ENCODE measurements at regions of chr14 and their contacts with region 1.

Region 1: GRCh38 chr14:102125546-102125945 is 14.2 kb upstream of the WDR20 start:
- DNase-seq: no peak
- ATAC-seq: no peak

Region 2: DNA sequence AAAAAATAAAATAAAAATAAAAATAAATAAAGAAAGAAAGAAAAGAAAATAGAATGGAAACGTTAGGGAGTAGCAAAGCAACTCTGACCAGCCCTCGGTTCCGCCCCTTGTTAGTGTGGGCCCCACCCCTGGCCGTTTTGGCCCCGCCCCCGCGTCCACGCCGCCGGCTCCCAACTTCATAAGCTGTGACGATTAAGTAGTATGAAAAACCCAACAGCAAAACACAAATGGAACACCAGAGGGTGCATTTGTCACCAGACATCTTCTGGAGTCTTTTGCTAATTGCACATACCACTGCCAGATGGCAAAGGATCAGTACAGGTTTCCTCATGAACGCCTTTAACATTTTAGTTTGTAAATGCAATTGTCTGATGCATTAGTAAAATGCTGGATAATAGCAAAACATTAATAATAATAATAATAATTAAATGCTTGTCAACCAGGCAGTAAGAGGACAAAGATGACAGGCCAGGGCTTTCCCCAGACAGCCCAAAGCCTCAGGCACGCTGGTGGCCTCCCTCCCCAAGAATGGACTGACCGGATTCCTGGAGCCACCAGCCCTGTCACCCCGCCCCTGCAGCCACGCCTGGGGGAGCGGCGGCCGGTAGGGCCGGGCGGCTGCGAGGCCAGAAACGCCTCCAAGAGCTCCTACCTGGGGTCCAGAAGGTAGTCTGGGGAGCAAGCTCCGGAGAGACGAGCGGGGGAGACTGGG is 62.3 kb before region 1 on chr14:
- intact Hi-C with region 1: no loop called
- DNase-seq: peak; percentile 91
- ATAC-seq: peak; percentile 97

Region 3: DNA sequence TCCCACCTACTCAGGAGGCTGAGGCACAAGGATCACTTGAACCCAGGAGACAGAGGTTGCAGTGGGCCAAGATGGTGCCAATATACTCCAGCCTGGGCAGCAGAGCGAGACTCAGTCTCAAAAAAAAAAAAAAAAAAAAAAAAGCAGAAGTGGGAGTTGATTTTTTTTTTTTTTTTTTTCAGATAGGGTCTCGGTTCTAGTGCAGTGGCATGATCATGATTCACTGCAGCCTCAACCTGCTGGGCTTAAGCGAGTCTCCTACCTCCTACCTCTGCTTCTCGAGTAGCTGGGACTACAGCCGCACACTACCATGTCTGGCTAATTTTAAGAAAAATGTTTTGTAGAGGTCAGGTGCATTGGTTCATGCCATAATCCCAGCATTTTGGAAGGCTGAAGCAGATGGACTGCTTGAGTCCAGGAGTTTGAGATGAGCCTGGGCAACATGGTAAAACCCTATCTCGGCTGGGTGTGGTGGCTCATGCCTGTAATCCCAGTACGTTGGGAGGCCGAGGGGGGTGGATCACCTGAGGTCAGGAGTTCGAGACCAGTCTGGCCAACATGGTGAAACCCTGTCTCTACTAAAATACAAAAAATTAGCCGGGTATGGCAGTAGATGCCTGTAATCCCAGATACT is 22.4 kb before region 1 on chr14:
- intact Hi-C with region 1: loop called (anchors 1 kb)
- DNase-seq: no peak
- ATAC-seq: no peak

Measured in sciatic nerve (tissue), 2 donors.